ENCODE measurements at regions of chr1 and their contacts with region 1.

Region 1: DNA sequence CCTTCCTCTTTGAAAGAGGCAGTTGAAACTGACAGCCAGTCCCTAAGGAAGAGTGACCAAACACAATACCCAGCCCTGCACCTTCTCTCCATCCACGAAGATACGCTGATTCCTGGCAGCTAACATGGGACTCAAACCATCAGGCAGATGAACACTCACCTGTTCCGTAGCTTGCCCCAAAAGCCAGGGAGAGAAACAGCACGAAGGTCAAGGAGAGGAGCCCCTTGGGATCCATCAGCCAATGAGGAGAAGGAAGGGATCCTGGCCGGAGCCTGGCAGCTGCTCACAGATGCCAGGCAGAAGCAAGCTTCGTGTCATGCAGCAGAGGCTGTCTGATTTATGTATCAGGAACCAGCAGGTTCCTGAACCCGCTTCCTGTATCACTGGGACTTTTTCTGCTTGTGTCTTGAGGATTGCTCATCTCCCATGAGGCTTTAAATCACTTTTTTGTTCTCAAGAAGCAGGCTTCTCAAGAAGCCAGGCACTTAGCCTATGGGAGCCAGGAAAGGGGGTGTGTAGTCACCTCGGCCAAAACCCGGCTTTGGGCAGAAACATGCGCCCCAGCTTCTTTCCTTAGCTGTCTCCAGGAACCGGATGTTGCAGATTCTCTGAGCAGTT is at the start of gene SLAMF1:
- DNase-seq: peak; percentile 49
- H3K4me3 Mint-ChIP-seq: peak within 1 kb of the TSS; percentile 88
- H3K27ac Mint-ChIP-seq: peak within 1 kb of the TSS; percentile 89
- H3K4me1 Mint-ChIP-seq: peaks cover 53% of the 10 kb centered on the region
- H3K27me3 Mint-ChIP-seq: no peaks in the 10 kb centered on the region
- total RNA-seq, gene SLAMF1: 106 to 113 TPM

Region 2: GRCh38 chr1:160575112-160575664 is 71.6 kb before region 1 on chr1:
- CTCF ChIA-PET with region 1: no interaction called
- POLR2A ChIA-PET with region 1: interaction called, 10 read pairs
- DNase-seq: no peak
- H3K4me3 Mint-ChIP-seq: peak overlapping the region; percentile 52
- H3K27ac Mint-ChIP-seq: peak overlapping the region; percentile 80
- H3K4me1 Mint-ChIP-seq: peaks cover 76% of the 10 kb centered on the region
- H3K27me3 Mint-ChIP-seq: no peaks in the 10 kb centered on the region

Region 3: DNA sequence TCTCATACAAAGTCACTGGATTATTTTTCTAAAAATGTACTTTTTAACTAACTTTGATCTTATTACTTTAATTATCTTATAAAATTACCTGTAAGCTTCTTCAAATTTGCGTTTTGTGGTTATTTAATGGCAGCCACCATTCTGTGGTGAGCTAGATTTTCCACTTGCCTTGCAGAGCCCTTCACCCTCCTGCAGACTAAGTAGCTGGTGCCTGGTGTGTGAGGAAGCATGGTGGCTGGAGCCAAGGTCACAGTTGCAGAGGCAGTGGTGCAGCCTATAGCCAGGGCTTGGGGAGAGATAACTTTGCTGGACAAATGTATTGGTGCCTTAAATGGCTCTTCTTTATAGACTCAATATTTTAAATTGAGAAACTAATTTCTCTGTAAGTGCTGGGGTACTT is 56.3 kb before region 1 on chr1:
- CTCF ChIA-PET with region 1: no interaction called
- POLR2A ChIA-PET with region 1: no interaction called
- DNase-seq: no peak
- H3K4me3 Mint-ChIP-seq: no peak overlapping the region
- H3K27ac Mint-ChIP-seq: no peak overlapping the region
- H3K4me1 Mint-ChIP-seq: peaks cover 4% of the 10 kb centered on the region
- H3K27me3 Mint-ChIP-seq: no peaks in the 10 kb centered on the region

Region 4: GRCh38 chr1:160629286-160630210 is 17.3 kb before region 1 on chr1:
- CTCF ChIA-PET with region 1: interaction called, 16 read pairs
- POLR2A ChIA-PET with region 1: interaction called, 362 read pairs
- DNase-seq: peak; percentile 81
- H3K4me3 Mint-ChIP-seq: peak overlapping the region; percentile 62
- H3K27ac Mint-ChIP-seq: peak overlapping the region; percentile 99
- H3K4me1 Mint-ChIP-seq: peaks cover 96% of the 10 kb centered on the region
- H3K27me3 Mint-ChIP-seq: no peaks in the 10 kb centered on the region

Region 5: DNA sequence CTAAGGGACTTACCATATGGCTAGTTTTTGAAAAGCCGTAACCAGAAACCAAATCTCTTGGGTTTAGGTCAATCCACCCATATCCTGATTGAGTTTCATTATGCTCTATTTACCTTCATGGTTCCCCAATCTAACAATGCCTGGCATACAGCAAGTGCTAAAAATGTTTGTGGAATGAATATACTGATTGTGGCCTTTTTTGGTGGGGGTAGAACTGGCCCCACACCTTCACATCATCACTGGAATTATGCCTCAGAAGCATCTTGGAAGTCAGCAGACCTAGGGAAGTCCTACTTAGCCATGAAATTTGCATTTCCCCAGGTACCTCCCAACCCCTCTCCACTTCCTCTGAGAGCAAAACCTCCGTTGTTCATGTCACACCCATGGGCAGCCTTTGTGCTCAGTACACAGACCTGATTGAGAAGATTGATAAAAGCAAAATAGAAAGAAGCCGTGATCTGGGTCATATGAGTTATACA is 17.8 kb after region 1 on chr1:
- CTCF ChIA-PET with region 1: interaction called, 12 read pairs
- POLR2A ChIA-PET with region 1: interaction called, 105 read pairs
- DNase-seq: peak; percentile 66
- H3K4me3 Mint-ChIP-seq: peak overlapping the region; percentile 62
- H3K27ac Mint-ChIP-seq: peak overlapping the region; percentile 91
- H3K4me1 Mint-ChIP-seq: peaks cover 77% of the 10 kb centered on the region
- H3K27me3 Mint-ChIP-seq: no peaks in the 10 kb centered on the region

Region 6: GRCh38 chr1:160711602-160712311 is 64.9 kb after region 1 on chr1 and contains the start of gene CD48:
- CTCF ChIA-PET with region 1: interaction called, 4 read pairs
- POLR2A ChIA-PET with region 1: interaction called, 20 read pairs
- DNase-seq: peak; percentile 61
- H3K4me3 Mint-ChIP-seq: no peak within 1 kb of the TSS
- H3K27ac Mint-ChIP-seq: no peak within 1 kb of the TSS
- H3K4me1 Mint-ChIP-seq: peaks cover 20% of the 10 kb centered on the region
- H3K27me3 Mint-ChIP-seq: no peaks in the 10 kb centered on the region
- total RNA-seq, gene CD48: 403 to 404 TPM

Region 7: GRCh38 chr1:160874935-160875334 is 228.1 kb after region 1 on chr1:
- CTCF ChIA-PET with region 1: no interaction called
- POLR2A ChIA-PET with region 1: no interaction called
- DNase-seq: no peak
- H3K4me3 Mint-ChIP-seq: no peak overlapping the region
- H3K27ac Mint-ChIP-seq: no peak overlapping the region
- H3K4me1 Mint-ChIP-seq: peaks cover 8% of the 10 kb centered on the region
- H3K27me3 Mint-ChIP-seq: peaks cover 5% of the 10 kb centered on the region

Measured in activated CD4-positive, alpha-beta memory T cell treated with anti-CD3 and anti-CD28 coated beads, Interleukin-2, amount 10 ng/mL, durations not matched to agents 7 days and 5 days (primary cell).